Activated CD4-positive, alpha-beta T cell treated with anti-CD3 and anti-CD28 coated beads for 36 hours (primary cell): ENCODE measurements at regions of chr11 and their contacts with region 1.

Region 1: DNA sequence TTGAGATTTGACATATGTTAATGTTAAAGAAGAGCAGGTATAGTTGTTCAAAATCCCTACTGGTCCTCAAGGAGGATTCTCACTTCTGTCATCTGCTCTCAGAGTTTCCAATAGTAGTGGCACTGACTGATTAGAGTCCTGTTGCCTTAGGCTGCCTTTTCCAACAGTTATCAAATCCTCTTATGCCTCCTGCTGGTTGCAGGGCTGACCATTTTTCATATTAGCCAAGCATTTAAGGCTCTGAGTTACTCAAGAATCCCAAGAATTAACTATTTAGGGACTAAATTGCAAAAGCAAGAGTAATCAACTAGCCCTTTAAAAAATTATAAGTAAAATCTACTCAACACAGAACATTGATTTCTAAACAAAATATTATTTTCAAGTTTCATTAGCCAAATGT is 212.0 kb upstream of the CHORDC1 start:
- DNase-seq: no peak
- ATAC-seq: no peak
- H3K4me3 Mint-ChIP-seq: no peak overlapping the region
- H3K27ac Mint-ChIP-seq: no peak overlapping the region
- H3K4me1 Mint-ChIP-seq: no peaks in the 10 kb centered on the region
- H3K27me3 Mint-ChIP-seq: no peaks in the 10 kb centered on the region

Region 2: DNA sequence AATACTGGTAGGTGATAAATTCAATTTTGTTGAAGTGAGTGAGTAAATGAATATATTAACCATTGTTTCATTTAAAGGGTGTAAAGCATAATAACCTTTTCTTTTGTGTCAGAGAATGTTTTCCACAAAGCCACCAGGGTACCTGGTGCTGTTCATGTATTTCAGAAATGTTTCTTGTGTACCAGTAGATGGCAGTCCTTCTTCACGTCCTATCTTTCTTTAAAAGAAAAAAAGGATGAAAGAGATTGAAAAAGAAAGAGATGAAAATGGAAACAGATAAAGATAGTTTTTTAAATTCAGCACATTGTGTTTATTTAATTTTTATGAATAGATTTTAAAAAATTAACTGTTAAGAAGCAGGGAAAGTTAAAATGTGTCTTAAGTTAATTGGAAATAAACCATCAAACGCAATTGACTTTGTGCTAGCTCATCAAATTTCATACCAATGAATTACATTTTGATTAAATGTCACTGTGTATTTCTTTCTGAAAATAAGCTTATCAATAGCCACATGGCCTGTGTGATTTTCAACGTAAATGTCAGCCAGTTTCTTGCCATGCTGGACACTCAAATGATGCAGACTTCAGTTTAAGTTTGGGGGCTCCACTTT is 146.5 kb before region 1 on chr11:
- CTCF ChIA-PET with region 1: interaction called, 3 read pairs
- POLR2A ChIA-PET with region 1: no interaction called
- intact Hi-C with region 1: loop called in 1 of 2 experiments (anchors 10 kb)
- DNase-seq: no peak
- ATAC-seq: no peak
- H3K4me3 Mint-ChIP-seq: no peak overlapping the region
- H3K27ac Mint-ChIP-seq: no peak overlapping the region
- H3K4me1 Mint-ChIP-seq: no peaks in the 10 kb centered on the region
- H3K27me3 Mint-ChIP-seq: peaks cover 2% of the 10 kb centered on the region